Activated T-helper 2 cell treated with anti-CD3 and anti-CD28 coated beads, Interferon-gamma antibody, Interleukin-2, Interleukin-4, amounts not matched to agents 10 μg/mL and 5 μg/mL and 100 μg/mL, durations not matched to agents 14 hours and 24 hours and 36 hours (primary cell): ENCODE measurements at regions of chr13 and their contacts with region 1.

Region 1: DNA sequence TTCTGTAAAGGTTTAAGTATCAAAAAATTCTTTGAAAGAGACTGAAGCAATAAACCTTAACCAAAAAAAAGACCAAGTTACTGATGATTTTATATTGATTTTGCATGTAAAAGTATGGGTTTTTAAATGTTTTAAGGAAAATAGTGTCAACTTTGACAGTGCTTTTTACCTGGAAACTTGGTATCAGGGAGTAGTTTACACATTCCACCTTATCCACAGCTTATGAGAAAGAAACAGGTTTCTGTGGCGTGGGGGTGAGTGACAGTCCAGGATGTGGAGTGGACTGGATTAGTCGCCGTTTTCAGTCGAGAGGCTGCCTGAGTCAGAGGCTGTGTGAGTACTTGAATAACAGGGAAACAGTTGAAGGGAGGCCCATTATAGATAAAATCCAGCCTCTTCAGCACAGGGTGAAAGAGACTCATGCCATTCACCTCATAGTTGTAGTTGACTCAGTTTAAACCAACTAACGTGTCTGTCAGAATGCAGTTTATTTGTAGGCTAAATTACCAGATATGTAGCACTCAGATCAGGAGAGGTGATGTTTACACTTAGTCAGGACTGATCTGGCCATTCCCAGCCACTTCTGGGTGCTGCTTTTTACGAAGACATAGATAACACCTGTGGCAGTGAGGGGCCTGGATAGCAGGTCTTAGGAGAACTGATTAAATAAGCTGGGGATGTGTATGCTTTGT is 595 bp upstream of the GPR183 start:
- DNase-seq: peak; percentile 64
- H3K4me3 Mint-ChIP-seq: peak overlapping the region; percentile 98
- H3K27ac Mint-ChIP-seq: peak overlapping the region; percentile 89
- H3K4me1 Mint-ChIP-seq: peaks cover 66% of the 10 kb centered on the region
- H3K27me3 Mint-ChIP-seq: no peaks in the 10 kb centered on the region

Region 2: DNA sequence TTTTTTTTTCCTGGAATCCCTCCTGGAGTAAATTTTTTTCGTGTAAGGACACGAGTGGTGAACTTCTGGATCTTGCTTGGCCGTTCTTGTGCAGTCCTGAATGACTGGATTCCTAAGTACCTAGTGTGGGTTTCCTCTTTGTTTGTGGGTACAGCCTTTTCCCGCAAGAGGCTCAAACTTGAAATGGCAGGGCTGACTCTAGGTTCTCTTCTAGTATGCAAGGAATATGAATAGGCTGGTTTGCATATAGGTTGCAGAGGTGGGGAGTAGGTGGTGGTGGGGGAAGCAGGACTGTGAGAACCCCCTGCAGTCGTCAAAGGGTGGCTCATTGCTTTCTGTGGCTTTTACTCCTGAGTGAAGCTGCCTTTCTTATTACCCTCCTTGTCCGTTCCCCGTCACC is 93.6 kb before region 1 on chr13:
- intact Hi-C with region 1: no loop called
- DNase-seq: no peak
- H3K4me3 Mint-ChIP-seq: peak overlapping the region; percentile 67
- H3K27ac Mint-ChIP-seq: peak overlapping the region; percentile 93
- H3K4me1 Mint-ChIP-seq: peaks cover 61% of the 10 kb centered on the region
- H3K27me3 Mint-ChIP-seq: no peaks in the 10 kb centered on the region

Region 3: DNA sequence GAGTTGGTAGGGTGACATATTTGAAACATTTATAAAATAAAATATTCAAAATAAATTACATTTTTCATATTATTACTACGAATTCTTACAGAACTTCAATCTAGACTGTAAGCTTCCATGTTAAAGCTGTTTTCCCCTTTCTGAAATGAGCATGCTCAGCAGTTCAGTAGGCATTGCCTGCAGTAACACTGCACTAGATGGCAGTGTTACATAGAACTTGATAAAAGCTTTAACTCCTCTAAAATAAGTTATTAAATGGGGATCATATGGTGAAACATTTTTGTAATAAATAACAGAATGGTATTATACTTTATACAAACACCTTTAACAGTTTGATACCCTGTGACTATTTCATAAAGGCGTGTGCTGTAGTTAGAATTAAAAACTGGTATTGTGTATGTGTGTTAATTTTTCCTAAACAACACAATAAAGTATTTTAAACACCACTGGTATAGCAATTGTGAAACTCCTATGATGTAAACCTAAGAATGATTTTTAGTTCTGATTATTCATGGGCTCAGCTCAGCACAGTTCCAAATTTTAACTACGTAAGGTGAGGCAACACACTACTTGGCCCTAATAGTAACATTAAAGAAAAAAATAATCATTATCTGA is 38.1 kb before region 1 on chr13:
- intact Hi-C with region 1: loop called (anchors 5 kb)
- DNase-seq: no peak
- H3K4me3 Mint-ChIP-seq: no peak overlapping the region
- H3K27ac Mint-ChIP-seq: no peak overlapping the region
- H3K4me1 Mint-ChIP-seq: peaks cover 54% of the 10 kb centered on the region
- H3K27me3 Mint-ChIP-seq: no peaks in the 10 kb centered on the region

Region 4: GRCh38 chr13:99275093-99275469 is 32.7 kb before region 1 on chr13:
- intact Hi-C with region 1: loop called (anchors 5 kb)
- DNase-seq: peak; percentile 38
- H3K4me3 Mint-ChIP-seq: peak overlapping the region; percentile 11
- H3K27ac Mint-ChIP-seq: peak overlapping the region; percentile 87
- H3K4me1 Mint-ChIP-seq: peaks cover 83% of the 10 kb centered on the region
- H3K27me3 Mint-ChIP-seq: no peaks in the 10 kb centered on the region

Region 5: GRCh38 chr13:99288089-99288488 is 19.7 kb before region 1 on chr13:
- intact Hi-C with region 1: loop called (anchors 1 kb)
- DNase-seq: peak; percentile 38
- H3K4me3 Mint-ChIP-seq: peak overlapping the region; percentile 3
- H3K27ac Mint-ChIP-seq: peak overlapping the region; percentile 80
- H3K4me1 Mint-ChIP-seq: peaks cover 75% of the 10 kb centered on the region
- H3K27me3 Mint-ChIP-seq: no peaks in the 10 kb centered on the region

Region 6: GRCh38 chr13:99296398-99296797 is 11.4 kb before region 1 on chr13:
- intact Hi-C with region 1: loop called (anchors 1 kb)
- DNase-seq: no peak
- H3K4me3 Mint-ChIP-seq: peak overlapping the region; percentile 73
- H3K27ac Mint-ChIP-seq: peak overlapping the region; percentile 87
- H3K4me1 Mint-ChIP-seq: peaks cover 74% of the 10 kb centered on the region
- H3K27me3 Mint-ChIP-seq: no peaks in the 10 kb centered on the region

Region 7: GRCh38 chr13:99322297-99323103 is 14.7 kb after region 1 on chr13:
- intact Hi-C with region 1: loop called (anchors 1 kb)
- DNase-seq: peak; percentile 44
- H3K4me3 Mint-ChIP-seq: peak overlapping the region; percentile 31
- H3K27ac Mint-ChIP-seq: peak overlapping the region; percentile 96
- H3K4me1 Mint-ChIP-seq: peaks cover 60% of the 10 kb centered on the region
- H3K27me3 Mint-ChIP-seq: no peaks in the 10 kb centered on the region